Activated CD4-positive, alpha-beta T cell treated with anti-CD3 and anti-CD28 coated beads, Interleukin-2, amount 10 ng/mL, durations not matched to agents 7 days and 5 days (primary cell): ENCODE measurements at regions of chr1 and their contacts with region 1.

Region 1: DNA sequence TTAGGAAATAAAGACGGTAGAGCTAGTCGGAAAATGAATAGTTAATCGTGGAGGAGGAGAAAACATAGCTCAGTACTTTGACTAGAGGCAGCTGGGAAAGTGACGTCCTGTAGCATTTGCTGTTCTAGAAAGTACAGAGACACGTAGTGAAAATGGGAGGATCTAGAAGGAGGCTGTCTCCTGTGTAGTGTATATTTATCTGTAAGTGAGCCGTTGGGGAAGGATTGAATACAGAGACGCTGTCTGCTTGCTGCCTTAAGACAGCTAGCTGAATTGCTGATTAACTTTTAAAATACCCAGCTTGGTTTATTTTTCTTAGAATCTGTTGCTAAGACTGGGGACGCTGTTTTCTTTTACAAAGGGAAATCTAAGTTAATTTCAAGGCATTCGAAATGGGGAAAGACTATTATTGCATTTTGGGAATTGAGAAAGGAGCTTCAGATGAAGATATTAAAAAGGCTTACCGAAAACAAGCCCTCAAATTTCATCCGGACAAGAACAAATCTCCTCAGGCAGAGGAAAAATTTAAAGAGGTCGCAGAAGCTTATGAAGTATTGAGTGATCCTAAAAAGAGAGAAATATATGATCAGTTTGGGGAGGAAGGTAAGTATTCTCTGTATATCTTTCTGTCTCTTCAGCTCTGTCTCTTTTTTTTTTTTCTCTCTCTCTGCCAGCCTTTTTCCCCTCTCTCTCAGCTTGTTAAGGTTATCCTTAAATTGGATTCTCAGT is at the start of gene DNAJB4:
- DNase-seq: peak; percentile 86
- H3K4me3 Mint-ChIP-seq: peak within 1 kb of the TSS; percentile 88
- H3K27ac Mint-ChIP-seq: peak within 1 kb of the TSS; percentile 98
- H3K4me1 Mint-ChIP-seq: peaks cover 38% of the 10 kb centered on the region
- H3K27me3 Mint-ChIP-seq: peaks cover 1% of the 10 kb centered on the region
- total RNA-seq, gene DNAJB4: 11.5 to 13.2 TPM

Region 2: DNA sequence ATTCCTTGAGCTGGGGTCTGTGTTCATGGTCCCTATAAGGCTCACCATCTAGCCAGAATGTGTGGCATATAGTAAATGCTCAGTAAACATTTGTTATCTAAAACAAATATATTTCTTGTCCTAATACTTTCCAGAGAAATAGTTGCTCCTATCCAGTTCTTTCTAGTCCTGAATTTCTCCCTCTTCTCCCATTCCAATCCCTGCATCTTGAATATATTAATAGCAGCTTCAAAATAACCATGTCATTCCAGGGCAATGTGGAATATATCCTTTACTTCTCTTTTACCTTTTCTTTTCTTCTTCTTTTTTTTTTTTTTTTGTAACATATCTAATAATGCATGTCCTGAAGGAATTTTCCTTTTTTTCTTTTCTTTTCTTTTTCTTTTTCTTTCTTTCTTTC is 10.3 kb after region 1 on chr1:
- CTCF ChIA-PET with region 1: interaction called, 12 read pairs
- POLR2A ChIA-PET with region 1: interaction called, 6 read pairs
- DNase-seq: no peak
- H3K4me3 Mint-ChIP-seq: no peak overlapping the region
- H3K27ac Mint-ChIP-seq: no peak overlapping the region
- H3K4me1 Mint-ChIP-seq: no peaks in the 10 kb centered on the region
- H3K27me3 Mint-ChIP-seq: no peaks in the 10 kb centered on the region

Region 3: DNA sequence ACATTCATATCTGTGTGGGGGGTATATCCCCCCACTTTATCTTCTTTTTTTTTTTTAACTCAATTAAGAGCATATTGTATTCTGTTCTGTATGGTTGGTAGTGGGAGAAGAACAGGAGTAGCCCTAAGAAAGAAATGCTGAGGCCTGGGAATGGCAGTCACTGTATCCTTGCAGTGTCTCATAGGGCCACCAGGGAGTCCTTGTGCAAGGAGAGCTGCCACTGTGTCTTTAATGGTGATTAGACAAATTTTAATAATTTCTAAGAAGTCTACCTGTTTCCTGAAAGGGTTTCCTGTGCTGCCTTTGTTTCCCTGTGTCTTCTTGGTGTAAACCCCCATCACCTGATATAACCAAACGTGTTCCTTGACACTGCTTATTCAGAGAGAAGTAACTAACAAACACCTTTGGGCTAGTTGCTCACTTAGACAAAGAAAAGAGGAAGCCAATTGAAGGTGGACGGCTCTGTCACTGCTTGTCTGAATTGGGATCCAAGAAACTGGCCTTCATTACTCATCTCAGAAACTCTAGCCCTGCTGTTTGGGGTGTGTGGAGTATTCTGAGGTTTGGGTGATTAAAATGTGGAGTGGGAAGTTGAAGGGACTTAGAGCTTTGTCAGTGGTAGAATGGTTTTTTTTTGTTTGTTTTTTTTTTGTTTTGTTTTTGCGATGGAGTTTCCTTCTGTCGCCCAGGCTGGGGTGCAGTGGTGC is 56.1 kb after region 1 on chr1:
- CTCF ChIA-PET with region 1: no interaction called
- POLR2A ChIA-PET with region 1: no interaction called
- DNase-seq: no peak
- H3K4me3 Mint-ChIP-seq: no peak overlapping the region
- H3K27ac Mint-ChIP-seq: no peak overlapping the region
- H3K4me1 Mint-ChIP-seq: no peaks in the 10 kb centered on the region
- H3K27me3 Mint-ChIP-seq: peaks cover 3% of the 10 kb centered on the region